ENCODE measurements at regions of chr12 and their contacts with region 1.

Region 1: GRCh38 chr12:3872800-3873636 is at the start of gene PARP11:
- DNase-seq: peak; percentile 99
- H3K4me3 Mint-ChIP-seq: peak within 1 kb of the TSS; percentile 87
- H3K27ac Mint-ChIP-seq: peak within 1 kb of the TSS; percentile 96
- H3K4me1 Mint-ChIP-seq: peaks cover 38% of the 10 kb centered on the region
- H3K27me3 Mint-ChIP-seq: no peaks in the 10 kb centered on the region
- total RNA-seq, gene PARP11: 19.9 to 20.7 TPM

Region 2: DNA sequence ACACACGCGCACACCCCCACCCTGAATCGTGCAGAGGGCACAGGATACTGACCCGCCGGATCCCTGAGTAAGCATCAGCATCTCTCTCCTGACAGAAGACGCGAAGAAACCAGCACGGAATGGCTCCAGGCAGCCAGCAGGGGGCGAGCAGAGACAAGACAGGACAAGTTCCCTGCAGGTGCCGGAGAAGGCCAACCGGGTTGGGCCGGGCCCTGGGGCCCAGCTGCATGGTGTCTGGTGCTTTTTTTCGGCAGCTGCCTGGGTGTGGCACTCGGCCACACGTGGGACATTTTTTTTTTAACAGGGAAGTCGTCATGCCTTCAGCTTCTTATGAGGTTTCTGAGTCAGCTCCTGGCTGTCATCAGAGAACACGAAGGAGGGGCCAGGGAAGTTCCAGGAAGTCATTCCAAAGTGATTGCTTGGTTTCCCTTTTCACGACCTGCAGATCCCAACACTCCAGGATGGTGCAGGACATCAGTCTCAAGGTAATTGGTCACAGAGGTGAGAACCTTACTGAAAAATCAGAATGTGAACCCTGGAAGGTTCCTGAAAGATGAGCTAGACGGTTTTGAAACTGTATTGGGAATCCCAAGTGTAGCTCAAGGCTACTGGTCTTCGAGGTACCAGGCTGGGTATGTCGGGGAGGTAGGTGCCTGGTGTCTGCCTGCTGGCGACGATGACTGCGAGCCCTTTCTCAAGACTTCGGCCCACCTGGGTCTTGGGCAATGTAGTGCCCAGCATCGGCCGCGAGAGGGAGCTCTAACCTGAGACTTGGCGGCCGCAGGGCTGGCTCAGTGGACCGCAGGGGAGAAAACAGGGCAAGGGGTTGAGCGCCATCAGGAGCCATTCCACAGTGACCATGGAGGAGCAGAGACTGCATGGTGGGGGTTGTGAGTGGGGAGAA is 572.8 kb before region 1 on chr12:
- CTCF ChIA-PET with region 1: no interaction called
- intact Hi-C with region 1: loop called (anchors 2 kb)
- DNase-seq: peak; percentile 92
- H3K4me3 Mint-ChIP-seq: peak overlapping the region; percentile 54
- H3K27ac Mint-ChIP-seq: peak overlapping the region; percentile 66
- H3K4me1 Mint-ChIP-seq: peaks cover 11% of the 10 kb centered on the region
- H3K27me3 Mint-ChIP-seq: peaks cover 6% of the 10 kb centered on the region

Region 3: DNA sequence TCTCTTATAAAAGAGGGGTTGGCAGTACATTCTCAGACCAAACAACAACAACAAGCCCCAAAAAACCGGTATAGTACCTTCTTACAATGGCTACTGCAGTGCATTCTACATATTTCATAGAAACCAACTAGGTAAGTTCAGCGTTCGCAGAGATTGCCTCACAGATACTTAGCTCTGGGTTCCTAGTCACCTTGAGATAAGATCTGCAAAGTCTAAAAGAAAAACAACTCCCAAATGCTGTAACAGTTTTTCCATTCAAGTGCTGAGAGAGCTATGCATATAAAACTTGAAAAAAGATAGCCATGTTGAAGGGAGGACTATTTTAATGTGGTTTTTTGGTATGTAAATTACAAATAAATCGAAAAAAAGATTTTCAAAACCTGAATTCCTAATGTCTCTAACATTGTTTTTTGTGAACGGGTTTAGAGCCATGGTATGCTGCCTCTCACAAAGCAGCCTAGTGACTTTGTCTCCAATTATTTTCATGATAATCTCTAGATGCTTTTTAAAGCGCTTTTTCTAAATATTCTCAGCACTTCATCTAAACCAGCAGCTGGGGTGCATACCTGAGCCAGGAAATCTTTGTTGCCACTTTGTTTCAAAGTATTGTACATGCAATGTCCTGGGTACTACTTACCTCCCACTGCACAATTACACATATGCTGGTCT is 63.5 kb before region 1 on chr12:
- CTCF ChIA-PET with region 1: no interaction called
- intact Hi-C with region 1: loop called (anchors 2 kb)
- DNase-seq: no peak
- H3K4me3 Mint-ChIP-seq: no peak overlapping the region
- H3K27ac Mint-ChIP-seq: no peak overlapping the region
- H3K4me1 Mint-ChIP-seq: peaks cover 27% of the 10 kb centered on the region
- H3K27me3 Mint-ChIP-seq: no peaks in the 10 kb centered on the region

Region 4: GRCh38 chr12:3947781-3948180 is 74.8 kb after region 1 on chr12:
- CTCF ChIA-PET with region 1: no interaction called
- intact Hi-C with region 1: loop called (anchors 2 kb)
- DNase-seq: no peak
- H3K4me3 Mint-ChIP-seq: no peak overlapping the region
- H3K27ac Mint-ChIP-seq: peak overlapping the region; percentile 74
- H3K4me1 Mint-ChIP-seq: peaks cover 57% of the 10 kb centered on the region
- H3K27me3 Mint-ChIP-seq: no peaks in the 10 kb centered on the region

Region 5: DNA sequence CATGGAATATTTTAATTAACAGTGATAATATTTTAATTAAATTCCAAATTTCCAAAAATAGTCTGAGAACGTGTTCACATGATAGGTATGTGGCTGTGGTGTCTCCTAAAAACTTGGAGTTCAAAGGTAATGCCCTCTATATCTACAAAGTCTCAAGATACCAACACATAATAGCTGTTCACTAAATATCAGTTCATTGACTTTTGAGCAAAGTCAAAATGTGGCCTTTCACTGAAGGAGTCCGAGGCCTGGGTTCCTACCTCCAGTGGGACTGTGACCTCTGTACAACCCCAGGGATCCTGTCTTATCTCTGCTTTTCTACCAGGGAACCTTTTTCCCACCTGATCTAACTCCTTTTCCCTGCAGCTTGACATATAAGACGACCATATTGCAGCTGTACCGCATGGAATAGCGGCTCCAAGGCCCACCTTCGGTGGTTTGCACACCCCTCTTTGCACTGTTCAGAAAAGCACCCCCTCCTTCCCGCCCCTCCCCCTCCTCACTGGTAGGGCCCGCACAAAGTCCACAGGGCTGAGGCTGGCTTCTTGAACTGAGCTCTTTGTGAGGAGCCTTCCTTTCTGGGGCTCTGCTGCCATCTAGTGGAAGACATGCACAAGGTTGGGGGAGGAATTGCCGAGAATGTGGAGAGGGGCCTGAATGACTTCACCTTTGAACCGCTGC is 403.6 kb after region 1 on chr12:
- CTCF ChIA-PET with region 1: no interaction called
- intact Hi-C with region 1: loop called (anchors 1 kb)
- DNase-seq: peak; percentile 95
- H3K4me3 Mint-ChIP-seq: peak overlapping the region; percentile 99
- H3K27ac Mint-ChIP-seq: peak overlapping the region; percentile 99
- H3K4me1 Mint-ChIP-seq: peaks cover 55% of the 10 kb centered on the region
- H3K27me3 Mint-ChIP-seq: no peaks in the 10 kb centered on the region

Region 6: DNA sequence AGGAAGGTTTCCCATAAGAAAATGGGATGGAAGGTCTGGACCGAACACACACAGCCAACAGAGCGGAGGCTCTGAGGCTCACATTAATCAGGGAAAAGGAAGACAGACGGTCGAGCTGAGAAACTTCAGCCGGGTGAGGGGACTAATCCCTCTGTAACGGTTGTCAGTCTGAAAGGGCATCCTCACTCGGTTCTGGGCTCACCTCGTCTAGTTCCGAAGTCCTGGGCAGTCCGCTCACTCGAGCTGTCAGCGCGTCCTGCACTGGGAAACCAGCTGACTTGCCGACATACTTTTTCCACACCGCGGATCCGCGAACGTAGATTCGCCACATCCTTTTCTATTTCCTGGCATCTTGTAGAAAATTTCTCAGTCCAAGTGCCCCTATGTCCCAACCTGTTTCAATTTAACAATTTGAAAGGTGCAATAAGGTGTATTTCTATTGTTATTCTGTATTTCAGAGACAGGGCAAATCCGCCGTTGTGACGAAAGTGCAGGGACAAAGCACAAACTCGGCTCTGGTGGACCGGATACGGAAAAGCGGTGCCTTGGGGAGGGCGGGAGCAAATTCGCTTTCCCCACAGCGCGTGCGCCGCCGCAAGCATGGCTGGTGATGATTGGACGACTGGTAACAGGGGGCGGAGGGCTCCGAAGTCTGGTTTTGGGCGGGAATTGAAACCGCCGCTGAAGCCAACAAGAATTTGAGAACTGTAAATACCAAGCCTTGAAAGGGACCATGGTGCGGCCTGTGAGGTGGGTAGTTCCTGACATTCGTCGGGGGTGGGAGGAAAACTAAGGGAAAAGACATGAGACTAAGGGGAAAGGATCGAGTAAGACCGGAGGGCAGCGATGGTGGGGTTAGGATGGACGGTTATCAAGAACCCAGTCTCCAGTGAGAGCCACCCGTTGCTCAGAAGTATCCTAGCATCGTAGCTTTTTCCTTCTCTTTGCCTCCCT is 665.5 kb after region 1 on chr12 and contains the start of gene RAD51AP1:
- CTCF ChIA-PET with region 1: no interaction called
- intact Hi-C with region 1: loop called (anchors 1 kb)
- DNase-seq: peak; percentile 97
- H3K4me3 Mint-ChIP-seq: peak within 1 kb of the TSS; percentile 97
- H3K27ac Mint-ChIP-seq: peak within 1 kb of the TSS; percentile 98
- H3K4me1 Mint-ChIP-seq: peaks cover 25% of the 10 kb centered on the region
- H3K27me3 Mint-ChIP-seq: no peaks in the 10 kb centered on the region
- total RNA-seq, gene RAD51AP1: 69.5 to 76.5 TPM

Region 7: DNA sequence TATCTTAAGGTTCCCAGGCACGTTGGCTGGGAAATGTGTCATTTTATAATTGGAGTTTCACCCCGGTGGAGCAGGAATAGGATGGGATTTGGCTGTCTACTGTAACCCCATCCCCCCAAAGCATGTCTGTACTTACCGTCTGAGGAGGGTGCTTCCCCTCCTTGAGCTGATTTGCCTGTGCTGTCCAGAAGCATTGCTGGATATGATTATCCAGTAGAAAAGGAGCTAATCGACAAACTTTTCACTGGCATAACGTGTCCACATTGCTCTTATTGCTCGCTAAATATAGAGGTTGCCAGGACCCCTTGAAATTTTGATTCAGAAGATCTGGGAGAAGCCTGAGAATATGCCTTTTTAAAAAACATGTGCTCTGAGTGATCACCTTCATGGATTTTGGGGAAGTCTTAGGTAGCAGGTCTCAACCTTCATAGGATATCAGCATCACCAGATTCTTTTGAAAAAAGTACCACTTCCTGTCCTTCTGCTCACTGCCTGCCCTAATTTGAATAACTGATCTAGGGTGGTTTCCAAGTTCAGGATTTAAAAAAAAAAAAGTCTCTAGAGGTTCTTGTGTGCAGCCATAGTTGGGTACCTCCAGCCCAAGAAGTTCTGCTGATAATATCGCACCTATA is 956.3 kb after region 1 on chr12:
- CTCF ChIA-PET with region 1: no interaction called
- intact Hi-C with region 1: loop called (anchors 10 kb)
- DNase-seq: peak; percentile 44
- H3K4me3 Mint-ChIP-seq: peak overlapping the region; percentile 64
- H3K27ac Mint-ChIP-seq: peak overlapping the region; percentile 87
- H3K4me1 Mint-ChIP-seq: peaks cover 59% of the 10 kb centered on the region
- H3K27me3 Mint-ChIP-seq: no peaks in the 10 kb centered on the region